Left cardiac atrium (tissue), 4 donors: ENCODE measurements at regions of chr14 and their contacts with region 1.

Region 1: DNA sequence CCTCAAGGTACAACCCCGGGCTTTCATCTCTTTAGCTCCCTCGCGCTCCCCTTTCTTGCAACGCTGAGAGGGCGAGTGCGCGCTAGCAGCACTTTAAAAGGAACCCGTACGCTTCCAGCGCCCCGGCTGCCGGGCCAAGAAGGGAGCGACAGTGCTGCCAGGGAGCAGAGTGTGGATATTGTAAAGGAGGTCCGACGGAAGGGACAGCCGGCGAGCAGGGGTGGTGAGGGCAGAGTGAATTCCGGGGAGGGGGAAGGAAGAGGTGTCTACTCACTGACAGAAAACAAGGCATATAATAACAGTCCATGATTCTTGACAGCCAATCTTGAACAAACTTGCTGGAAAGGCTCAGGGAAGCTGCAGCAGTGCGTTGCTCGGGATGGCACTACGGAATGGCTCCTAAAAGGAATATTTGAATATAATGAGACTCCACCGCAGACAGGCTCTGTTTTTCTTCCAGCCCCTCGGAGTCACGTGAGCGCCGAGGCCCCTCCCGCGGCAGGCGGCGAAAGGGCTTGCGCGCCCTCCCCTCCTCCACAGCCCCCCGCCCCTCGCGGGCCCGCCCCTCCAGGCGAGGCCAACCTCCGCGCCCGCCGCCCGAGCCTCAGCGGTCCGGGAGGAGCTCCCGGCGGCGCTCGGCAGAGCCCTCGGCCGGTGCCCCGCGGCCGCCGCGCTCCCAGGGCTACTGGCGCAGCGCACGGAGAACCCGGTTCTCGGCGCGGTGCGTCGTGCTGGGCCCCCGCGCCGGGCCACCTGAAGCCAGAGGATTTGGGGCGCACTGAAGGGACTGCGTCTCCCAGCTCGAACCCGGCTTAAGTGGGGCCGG is 3.4 kb downstream of the BMP4 start:
- DNase-seq: peak; percentile 87
- ATAC-seq: peak; percentile 90 to 92

Region 2: GRCh38 chr14:53894456-53894855 is 58.8 kb before region 1 on chr14:
- intact Hi-C with region 1: loop called in 1 of 2 experiments (anchors 5 kb)
- DNase-seq: no peak
- ATAC-seq: peak in 1 of 2 donors; percentile 47

Region 3: DNA sequence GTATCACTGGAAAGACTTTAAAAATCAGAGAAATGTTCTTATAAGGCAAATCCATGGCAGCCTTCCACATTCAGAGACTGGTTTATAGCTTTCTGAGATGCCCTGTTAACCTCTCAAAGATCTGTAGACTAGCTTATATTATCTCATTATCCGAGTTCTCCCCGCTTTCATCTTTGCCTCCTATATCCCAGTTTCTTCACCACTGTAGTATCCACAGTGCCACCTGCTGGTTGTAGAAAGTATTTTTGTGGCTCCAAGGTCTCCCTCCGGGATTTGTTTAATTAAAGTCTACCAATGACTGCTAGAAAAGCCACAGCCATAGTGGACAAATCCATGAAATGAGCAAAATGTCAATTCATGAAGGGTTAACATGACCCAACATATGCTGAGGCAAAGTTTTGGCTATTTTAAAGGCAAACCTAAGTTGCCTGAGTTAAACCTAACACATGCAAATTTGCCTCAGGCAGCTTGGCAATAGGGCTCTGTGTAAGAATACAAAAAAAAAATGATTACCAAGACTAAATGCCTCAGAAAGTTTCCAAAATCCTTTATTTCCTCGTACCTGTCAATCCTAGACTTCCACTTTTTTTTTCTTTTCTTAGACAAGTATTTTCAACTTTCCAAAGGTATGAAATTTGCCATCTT is 222.2 kb after region 1 on chr14:
- intact Hi-C with region 1: loop called (anchors 10 kb)
- DNase-seq: peak; percentile 58
- ATAC-seq: peak; percentile 24 to 60